Calu3 (cell line): ENCODE measurements at regions of chr12 and their contacts with region 1.

Region 1: GRCh38 chr12:67355578-67356379 is 86.6 kb downstream of the CAND1 start:
- DNase-seq: peak; percentile 11
- H3K4me3 Mint-ChIP-seq: no peak overlapping the region
- H3K27ac Mint-ChIP-seq: no peak overlapping the region
- H3K4me1 Mint-ChIP-seq: no peaks in the 10 kb centered on the region
- H3K27me3 Mint-ChIP-seq: no peaks in the 10 kb centered on the region
- CTCF ChIP-seq: peak; percentile 29

Region 2: DNA sequence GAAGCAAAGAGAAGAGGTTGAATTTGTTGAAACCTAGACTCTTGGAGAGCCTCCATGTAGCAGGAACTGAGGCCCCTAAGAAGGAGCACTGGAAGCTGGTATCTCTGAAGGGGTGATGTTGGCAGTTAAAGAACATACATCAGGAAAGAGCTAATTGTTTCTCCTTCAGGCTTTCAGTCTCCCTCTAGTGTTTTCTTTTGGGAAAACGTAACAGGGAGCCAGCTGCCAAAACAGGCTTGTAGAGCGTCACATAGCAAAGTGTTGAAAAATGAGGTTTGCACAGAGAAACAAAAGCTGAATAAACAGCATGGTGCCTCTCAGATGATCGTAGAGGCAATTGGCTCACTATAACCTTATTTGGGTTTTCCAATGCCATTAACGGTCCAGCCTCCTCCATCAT is 133.5 kb before region 1 on chr12:
- CTCF ChIA-PET with region 1: interaction called, 11 read pairs
- intact Hi-C with region 1: no loop called
- DNase-seq: peak; percentile 36
- H3K4me3 Mint-ChIP-seq: no peak overlapping the region
- H3K27ac Mint-ChIP-seq: no peak overlapping the region
- H3K4me1 Mint-ChIP-seq: peaks cover 10% of the 10 kb centered on the region
- H3K27me3 Mint-ChIP-seq: peaks cover 5% of the 10 kb centered on the region
- CTCF ChIP-seq: peak; percentile 47

Region 3: GRCh38 chr12:67237231-67237630 is 118.5 kb before region 1 on chr12:
- CTCF ChIA-PET with region 1: no interaction called
- intact Hi-C with region 1: no loop called
- DNase-seq: peak; percentile 58
- H3K4me3 Mint-ChIP-seq: no peak overlapping the region
- H3K27ac Mint-ChIP-seq: peak overlapping the region; percentile 24
- H3K4me1 Mint-ChIP-seq: peaks cover 20% of the 10 kb centered on the region
- H3K27me3 Mint-ChIP-seq: no peaks in the 10 kb centered on the region
- CTCF ChIP-seq: no peak

Region 4: GRCh38 chr12:67415473-67415872 is 59.7 kb after region 1 on chr12:
- CTCF ChIA-PET with region 1: interaction called, 3 read pairs
- intact Hi-C with region 1: loop called (anchors 1 kb)
- DNase-seq: peak; percentile 15
- H3K4me3 Mint-ChIP-seq: no peak overlapping the region
- H3K27ac Mint-ChIP-seq: no peak overlapping the region
- H3K4me1 Mint-ChIP-seq: no peaks in the 10 kb centered on the region
- H3K27me3 Mint-ChIP-seq: no peaks in the 10 kb centered on the region
- CTCF ChIP-seq: no peak

Region 5: DNA sequence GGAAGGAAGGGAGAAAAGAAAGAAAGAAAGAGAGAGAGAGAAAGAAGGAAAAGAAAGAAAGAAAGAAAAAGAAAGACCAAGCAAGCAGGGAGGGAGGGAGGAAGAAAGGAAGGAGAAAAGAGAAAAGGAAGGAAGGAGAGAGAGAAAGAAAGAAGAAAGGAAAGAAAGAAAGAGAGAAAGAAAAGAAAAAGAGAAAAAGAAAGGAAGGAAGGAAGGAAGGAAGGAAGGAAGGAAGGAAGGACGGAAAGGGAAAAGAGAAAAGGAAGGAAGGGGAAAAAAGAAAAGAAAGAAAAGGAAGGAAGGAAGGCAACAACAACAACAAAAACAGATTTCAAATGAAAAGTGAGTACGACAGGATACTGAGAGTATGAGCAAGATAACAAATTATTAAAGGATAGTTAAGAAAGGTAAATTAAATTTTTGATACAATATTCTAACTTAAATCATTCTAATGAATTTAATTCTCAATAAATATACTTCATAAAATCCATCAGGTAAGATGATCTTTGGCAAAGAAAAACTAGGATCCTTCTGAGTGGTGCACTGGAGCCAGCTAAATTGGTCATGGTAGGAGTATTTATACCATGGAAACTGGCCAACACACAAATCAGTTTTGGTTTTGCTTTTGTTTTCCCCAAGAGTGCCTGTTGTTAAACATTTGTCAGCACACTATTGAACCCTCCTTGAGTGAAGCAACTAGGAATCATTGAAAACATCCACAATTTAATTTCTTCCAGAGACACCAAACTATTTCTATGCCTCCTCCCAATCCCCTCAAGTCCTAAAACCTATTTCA is 236.6 kb after region 1 on chr12:
- CTCF ChIA-PET with region 1: interaction called, 7 read pairs
- intact Hi-C with region 1: loop called (anchors 5 kb)
- DNase-seq: peak; percentile 45
- H3K4me3 Mint-ChIP-seq: peak overlapping the region; percentile 13
- H3K27ac Mint-ChIP-seq: peak overlapping the region; percentile 82
- H3K4me1 Mint-ChIP-seq: peaks cover 47% of the 10 kb centered on the region
- H3K27me3 Mint-ChIP-seq: no peaks in the 10 kb centered on the region
- CTCF ChIP-seq: no peak

Region 6: DNA sequence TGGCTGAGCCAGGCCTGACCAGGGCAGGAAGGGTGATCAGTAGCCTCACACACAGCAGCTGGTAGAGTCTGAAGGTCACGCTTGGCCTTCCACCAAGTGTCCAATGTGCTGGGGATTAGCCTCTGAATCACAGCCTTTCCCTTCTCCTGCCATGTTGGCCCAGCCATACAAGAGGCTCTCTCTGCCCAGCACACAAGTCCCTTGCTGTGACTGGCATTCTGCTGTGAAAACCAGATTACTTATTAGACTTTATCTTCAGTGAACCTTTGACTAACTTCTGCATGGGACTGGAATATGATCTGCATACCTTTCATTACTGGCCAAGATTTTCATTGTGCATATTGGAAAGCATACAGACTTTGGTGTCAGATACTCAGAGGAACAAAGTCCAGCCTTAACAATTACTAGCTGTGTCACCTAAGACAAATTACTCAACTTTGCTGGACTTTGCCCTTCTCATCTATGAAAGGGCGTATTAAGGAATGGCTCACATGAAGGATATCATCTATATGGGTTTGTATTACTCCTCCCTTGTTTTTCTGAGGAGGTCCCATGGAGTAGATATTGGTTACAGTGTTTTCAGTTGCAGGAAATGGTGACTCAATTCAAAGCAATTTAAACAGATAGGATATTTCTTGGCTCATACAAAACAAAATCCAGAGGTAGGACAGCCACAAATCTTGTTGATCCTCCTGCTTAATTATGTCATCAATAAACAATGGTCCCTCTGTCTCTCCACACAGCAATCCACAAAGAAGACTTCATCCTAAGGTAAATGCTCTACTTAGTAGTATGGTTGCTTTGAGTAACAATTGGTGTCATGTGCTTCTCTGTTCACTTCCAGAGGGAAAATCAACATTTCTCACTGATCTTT is 392.3 kb after region 1 on chr12:
- CTCF ChIA-PET with region 1: no interaction called
- intact Hi-C with region 1: loop called (anchors 5 kb)
- DNase-seq: peak; percentile 67
- H3K4me3 Mint-ChIP-seq: peak overlapping the region; percentile 53
- H3K27ac Mint-ChIP-seq: peak overlapping the region; percentile 90
- H3K4me1 Mint-ChIP-seq: peaks cover 72% of the 10 kb centered on the region
- H3K27me3 Mint-ChIP-seq: no peaks in the 10 kb centered on the region
- CTCF ChIP-seq: no peak

Region 7: GRCh38 chr12:68001486-68002466 is 646.0 kb after region 1 on chr12:
- CTCF ChIA-PET with region 1: interaction called, 5 read pairs
- intact Hi-C with region 1: loop called (anchors 5 kb)
- DNase-seq: no peak
- H3K4me3 Mint-ChIP-seq: no peak overlapping the region
- H3K27ac Mint-ChIP-seq: no peak overlapping the region
- H3K4me1 Mint-ChIP-seq: no peaks in the 10 kb centered on the region
- H3K27me3 Mint-ChIP-seq: no peaks in the 10 kb centered on the region
- CTCF ChIP-seq: peak; percentile 56